ENCODE measurements at regions of chr1 and their contacts with region 1.

Region 1: DNA sequence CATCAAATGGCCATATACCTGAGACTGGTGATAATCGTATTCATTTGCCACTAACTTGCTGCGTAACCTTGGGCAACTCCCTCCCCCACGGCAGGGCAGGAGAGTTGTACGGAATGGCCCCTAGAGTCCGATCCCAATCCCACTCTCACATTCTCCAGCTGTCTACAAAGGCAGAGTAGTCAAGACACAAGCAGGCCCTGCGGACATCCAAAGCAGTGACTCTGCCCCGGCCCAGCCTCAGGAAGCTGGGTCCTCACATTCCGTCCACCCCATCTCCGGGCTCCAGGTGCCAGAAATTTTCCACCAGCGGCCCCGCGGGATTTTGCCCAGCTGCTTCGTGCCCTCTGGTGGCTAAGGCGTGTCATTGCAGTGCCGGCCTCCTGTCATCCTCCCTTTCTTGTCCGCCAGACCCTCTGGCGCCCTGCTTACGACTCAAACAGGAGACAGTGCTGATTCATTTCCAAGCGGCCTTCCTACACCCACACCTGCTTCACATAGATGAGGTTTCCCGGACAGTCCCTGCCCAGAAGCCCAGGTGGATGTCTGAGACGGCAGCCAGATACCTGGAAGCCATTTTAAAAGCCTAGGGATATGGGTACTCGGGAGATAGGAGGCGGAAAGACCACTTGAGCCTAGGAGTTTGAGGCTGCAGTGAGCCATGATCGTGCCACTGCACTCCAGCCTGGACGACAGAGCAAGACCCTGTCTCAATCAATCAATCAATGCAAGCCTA is 2.9 kb upstream of the S100A2 start:
- DNase-seq: peak; percentile 93
- H3K4me3 ChIP-seq: peak overlapping the region in 1 of 2 donors; percentile 19
- H3K27ac ChIP-seq: peak overlapping the region; percentile 89 to 91
- H3K4me1 ChIP-seq: peaks cover 5 to 12% of the 10 kb centered on the region in 2 donors
- H3K27me3 ChIP-seq: no peaks in the 10 kb centered on the region
- CTCF ChIP-seq: peak; percentile 99 to 100 (median 99)
- POLR2A ChIP-seq: peak in 1 of 2 donors; percentile 37

Region 2: DNA sequence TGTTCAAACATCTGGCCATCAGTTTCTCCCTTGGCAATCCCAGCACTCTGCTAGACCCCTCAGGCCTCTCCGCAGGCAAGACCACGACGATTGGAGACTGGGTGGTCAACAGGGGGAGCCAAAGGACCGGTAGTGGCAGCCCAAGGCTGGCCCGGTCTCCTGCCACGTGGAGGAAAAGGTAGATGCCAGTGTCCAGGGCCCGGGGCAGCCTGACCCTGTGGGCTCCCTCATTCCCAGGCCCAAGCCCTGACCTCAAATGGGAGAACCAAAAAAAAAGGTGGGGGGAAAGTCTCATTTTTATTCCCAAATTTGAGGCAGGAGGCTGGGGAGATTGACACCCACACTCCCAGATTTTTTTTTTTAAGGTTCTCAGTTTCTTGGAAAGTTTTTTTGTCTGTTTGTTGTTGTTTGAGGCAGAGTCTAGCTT is 57.5 kb before region 1 on chr1:
- intact Hi-C with region 1: loop called (anchors 1 kb)
- DNase-seq: peak; percentile 87
- H3K4me3 ChIP-seq: no peak overlapping the region
- H3K27ac ChIP-seq: peak overlapping the region; percentile 37 to 45
- H3K4me1 ChIP-seq: peaks cover 8 to 22% of the 10 kb centered on the region in 2 donors
- H3K27me3 ChIP-seq: no peaks in the 10 kb centered on the region
- CTCF ChIP-seq: peak; percentile 92 to 95 (median 94)
- POLR2A ChIP-seq: peak in 1 of 2 donors; percentile 13

Region 3: DNA sequence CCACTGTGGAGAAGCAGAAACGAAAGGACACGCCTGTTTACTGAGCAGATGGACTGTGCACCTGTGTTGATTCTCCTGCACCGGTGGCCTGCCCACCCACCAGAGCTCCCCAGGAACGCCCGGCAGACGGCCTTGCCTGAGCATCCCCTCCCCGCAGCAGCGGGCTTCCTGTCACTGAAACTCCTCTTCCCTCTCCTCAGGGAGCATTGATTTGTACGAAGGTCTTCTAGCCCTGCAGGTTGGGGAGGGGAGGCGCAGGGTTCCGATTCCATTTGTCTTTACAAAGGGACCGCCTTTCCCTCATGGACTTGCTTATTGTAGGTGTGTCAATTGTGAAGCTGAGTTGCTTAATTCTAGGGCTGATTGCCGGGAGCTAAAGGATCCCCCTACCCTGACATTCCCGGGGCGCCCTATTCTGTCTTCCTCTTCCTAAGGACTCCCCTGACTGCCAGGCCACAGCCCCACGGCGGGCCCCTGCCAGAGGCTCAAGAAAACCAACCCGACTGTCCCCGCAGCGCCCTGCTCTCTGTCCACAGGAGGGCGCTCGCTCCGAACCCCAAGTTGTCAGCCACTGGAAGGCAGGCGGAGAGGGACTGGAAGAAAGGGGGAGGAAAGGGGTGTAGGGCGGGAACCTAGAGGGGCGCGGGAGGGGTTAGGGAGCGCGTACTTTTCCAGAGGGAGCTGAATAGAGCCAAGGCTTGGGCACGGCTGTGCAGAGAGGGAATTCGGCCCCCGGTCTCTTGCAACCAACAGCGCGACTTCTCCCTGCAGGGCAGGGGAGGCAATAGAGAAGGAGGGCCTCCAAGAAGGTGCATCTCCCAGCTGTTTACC is 35.5 kb before region 1 on chr1:
- intact Hi-C with region 1: loop called (anchors 2 kb)
- DNase-seq: peak; percentile 91 to 92
- H3K4me3 ChIP-seq: peak overlapping the region; percentile 82 to 96
- H3K27ac ChIP-seq: peak overlapping the region; percentile 99 to 100
- H3K4me1 ChIP-seq: peaks cover 3 to 4% of the 10 kb centered on the region in 2 donors
- H3K27me3 ChIP-seq: no peaks in the 10 kb centered on the region
- CTCF ChIP-seq: peak; percentile 93 to 95 (median 94)
- POLR2A ChIP-seq: no peak